ENCODE measurements at regions of chr2 and their contacts with region 1.

Region 1: GRCh38 chr2:226906163-226906693 is 70.4 kb downstream of the RHBDD1 start:
- DNase-seq: no peak
- H3K4me3 Mint-ChIP-seq: no peak overlapping the region
- H3K27ac Mint-ChIP-seq: no peak overlapping the region
- H3K4me1 Mint-ChIP-seq: peaks cover 10% of the 10 kb centered on the region
- H3K27me3 Mint-ChIP-seq: no peaks in the 10 kb centered on the region

Region 2: DNA sequence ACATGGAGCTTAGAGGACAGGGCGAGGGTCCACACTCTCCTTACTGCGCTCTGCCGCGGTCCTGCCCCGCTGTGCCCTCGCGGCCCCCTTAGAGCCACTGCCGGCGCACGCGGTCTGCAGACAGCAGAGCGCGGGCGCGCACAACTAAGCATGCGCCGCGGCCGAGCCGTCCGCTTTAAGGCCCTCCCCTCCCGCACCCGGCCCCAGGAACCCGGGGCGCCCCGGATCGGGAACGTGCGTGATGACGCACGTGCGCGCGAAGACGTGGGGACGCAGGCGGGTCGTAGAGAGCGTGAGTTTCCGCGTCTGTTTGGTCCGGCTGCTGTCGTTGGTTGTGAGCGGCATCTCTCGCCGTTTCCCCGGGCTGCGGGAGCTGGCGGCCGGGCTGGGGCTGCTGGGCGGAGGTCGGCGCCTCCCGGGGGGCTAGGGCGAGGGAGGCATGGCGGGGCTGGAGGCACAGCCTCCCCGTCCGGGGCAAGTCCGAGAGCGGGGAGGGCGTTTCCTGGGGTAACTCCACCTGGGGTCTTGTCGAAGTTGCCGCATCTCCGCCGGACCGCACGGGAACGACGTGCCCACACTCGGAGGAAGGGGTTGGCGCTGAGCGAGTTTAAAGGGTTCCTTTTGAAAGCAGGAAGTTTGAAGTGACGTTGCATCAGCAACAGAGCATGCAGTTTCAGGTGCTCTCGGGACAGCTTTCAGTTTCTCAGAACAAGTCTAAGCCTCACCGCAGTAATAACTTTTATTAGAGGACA is 70.3 kb before region 1 on chr2 and contains the start of gene RHBDD1:
- intact Hi-C with region 1: loop called (anchors 10 kb)
- DNase-seq: peak; percentile 98
- H3K4me3 Mint-ChIP-seq: peak within 1 kb of the TSS; percentile 95
- H3K27ac Mint-ChIP-seq: peak within 1 kb of the TSS; percentile 97
- H3K4me1 Mint-ChIP-seq: peaks cover 54% of the 10 kb centered on the region
- H3K27me3 Mint-ChIP-seq: no peaks in the 10 kb centered on the region
- total RNA-seq, gene RHBDD1: 41.3 and 44.7 TPM in 2 replicates